ENCODE measurements at regions of chr2 and their contacts with region 1.

Region 1: GRCh38 chr2:216535454-216535995 is 36.9 kb downstream of the RPL37A start:
- DNase-seq: no peak

Region 2: DNA sequence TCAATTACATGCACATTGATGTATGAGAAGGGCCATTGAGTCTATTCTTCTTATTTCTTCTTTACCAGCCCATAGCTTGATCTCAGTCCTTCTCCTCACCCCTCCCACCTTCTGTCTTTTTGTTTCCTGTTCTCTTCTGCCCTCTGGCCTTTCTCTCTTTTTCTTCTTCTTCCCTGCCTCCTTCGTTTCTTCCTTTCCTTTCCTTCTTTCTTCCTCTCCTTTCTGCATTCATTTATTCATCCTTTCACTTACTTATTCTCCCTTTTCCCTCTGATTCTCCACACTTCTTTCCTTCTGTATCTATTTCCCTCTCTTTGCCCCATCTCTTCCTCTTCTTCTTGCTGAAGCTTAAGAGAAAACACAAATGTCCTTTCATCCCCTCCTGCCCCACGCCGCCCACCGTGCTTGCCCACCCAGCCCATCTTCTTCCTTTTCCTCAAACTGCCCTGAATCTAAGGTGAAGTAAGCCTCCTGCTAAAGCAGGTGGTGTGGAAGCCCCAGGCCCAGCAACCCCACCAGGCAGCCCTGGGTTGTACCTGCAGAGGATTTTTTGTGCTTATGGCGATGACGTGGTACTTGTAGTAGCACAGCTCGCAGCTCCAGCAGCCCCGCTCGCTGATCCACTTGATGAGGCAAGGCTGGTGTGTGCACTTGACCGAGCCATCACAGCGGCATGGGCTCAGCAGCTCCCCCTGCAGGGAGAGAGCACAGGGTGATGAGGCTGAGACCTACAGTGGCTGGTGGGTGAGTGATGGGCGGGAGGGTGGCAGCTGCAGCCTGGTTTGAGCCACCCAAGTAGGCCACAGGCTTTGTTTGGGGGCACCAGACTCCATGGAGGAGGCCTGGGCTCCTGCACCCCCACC is 252.3 kb before region 1 on chr2:
- in situ Hi-C with region 1: no loop called
- DNase-seq: peak; percentile 45

Region 3: DNA sequence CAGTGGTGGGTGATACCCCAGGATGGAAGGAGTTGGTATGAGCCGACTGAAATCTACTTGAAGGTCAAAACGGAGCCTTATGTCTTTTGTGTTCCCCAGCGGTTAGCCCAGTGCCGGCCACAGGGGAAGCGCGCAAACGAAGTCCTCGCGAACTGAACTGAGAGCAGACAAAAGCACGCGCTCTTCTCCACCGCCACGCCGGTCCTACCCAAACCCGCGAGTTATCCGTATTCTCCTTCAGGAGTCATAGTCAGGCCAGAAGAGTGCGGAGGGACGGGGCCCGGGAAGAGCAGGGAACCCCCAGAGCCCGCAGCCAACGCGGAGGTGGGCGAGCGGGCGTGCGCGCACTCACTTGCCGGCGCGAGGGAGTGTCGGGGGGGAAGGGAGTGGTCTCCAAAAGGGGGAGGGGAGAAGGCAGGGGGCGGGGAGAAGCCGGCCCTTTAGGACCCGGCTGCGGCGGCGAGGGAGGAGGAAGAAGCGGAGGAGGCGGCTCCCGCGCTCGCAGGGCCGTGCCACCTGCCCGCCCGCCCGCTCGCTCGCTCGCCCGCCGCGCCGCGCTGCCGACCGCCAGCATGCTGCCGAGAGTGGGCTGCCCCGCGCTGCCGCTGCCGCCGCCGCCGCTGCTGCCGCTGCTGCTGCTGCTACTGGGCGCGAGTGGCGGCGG is 97.6 kb after region 1 on chr2 and contains the start of gene IGFBP2:
- in situ Hi-C with region 1: loop called (anchors 25 kb)
- DNase-seq: no peak

Region 4: DNA sequence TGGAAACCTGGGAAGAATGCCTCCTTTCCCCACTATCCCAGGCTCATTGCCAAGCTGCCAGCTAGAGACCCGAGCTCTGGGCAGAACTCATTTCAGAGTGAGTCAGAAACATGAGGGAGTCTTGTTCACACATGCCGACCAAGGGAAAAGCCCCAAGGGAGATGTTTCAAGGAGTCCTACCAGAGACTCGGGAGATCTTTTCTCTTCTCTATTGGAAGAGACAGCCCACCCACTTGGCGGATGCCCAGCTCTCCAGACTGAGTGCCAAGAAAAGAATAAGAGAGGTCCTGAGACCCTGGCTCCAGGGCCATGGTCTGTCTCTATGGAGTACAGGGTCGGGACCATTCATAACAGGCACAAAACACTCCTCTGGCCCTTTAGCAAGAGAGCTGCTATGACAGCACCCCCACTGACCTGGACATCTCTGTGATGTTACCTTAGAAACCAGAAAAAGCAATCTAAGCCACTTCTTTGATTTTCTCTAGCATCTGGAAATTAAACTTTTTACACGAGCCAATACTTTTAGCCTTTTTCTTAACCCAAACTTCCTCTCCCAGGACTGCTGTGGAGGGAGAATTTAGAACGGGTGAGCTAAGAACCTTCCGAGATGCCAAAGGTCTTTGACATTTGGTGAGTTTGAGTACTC is 178.3 kb after region 1 on chr2:
- in situ Hi-C with region 1: no loop called
- DNase-seq: peak; percentile 28

Measured in ACHN (cell line).